Activated CD4-positive, alpha-beta memory T cell treated with anti-CD3 and anti-CD28 coated beads for 36 hours (primary cell): ENCODE measurements at regions of chr1 and their contacts with region 1.

Region 1: GRCh38 chr1:167687919-167688519 is 33.8 kb upstream of the MPZL1 start:
- DNase-seq: peak; percentile 81
- H3K4me3 Mint-ChIP-seq: no peak overlapping the region
- H3K27ac Mint-ChIP-seq: peak overlapping the region; percentile 76
- H3K4me1 Mint-ChIP-seq: peaks cover 19% of the 10 kb centered on the region
- H3K27me3 Mint-ChIP-seq: no peaks in the 10 kb centered on the region

Region 2: DNA sequence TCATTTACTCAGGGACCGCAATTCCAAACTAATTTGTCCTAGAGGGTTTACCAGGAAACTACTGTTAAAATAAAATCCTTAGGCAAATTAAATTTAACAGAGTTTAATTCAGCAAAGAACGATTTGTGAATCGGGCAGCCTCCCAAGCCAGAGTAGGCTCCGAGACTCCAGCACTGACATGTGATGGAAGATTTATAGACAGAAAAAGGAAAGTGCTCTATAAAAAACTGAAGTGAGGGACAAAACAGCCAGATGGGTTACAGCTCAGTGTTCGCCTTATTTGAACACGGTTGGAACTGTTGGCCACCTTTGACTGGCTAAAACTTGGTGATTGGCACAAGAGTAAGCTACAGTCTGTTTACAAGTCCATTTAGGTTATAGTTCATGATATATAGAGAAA is 93.2 kb before region 1 on chr1:
- CTCF ChIA-PET with region 1: interaction called, 227 read pairs
- POLR2A ChIA-PET with region 1: interaction called, 14 read pairs
- intact Hi-C with region 1: loop called (anchors 1 kb)
- DNase-seq: no peak
- H3K4me3 Mint-ChIP-seq: no peak overlapping the region
- H3K27ac Mint-ChIP-seq: no peak overlapping the region
- H3K4me1 Mint-ChIP-seq: peaks cover 3% of the 10 kb centered on the region
- H3K27me3 Mint-ChIP-seq: no peaks in the 10 kb centered on the region

Region 3: GRCh38 chr1:167617153-167618147 is 70.6 kb before region 1 on chr1:
- CTCF ChIA-PET with region 1: interaction called, 25 read pairs
- POLR2A ChIA-PET with region 1: no interaction called
- intact Hi-C with region 1: no loop called
- DNase-seq: peak; percentile 48
- H3K4me3 Mint-ChIP-seq: peak overlapping the region; percentile 69
- H3K27ac Mint-ChIP-seq: peak overlapping the region; percentile 87
- H3K4me1 Mint-ChIP-seq: peaks cover 52% of the 10 kb centered on the region
- H3K27me3 Mint-ChIP-seq: no peaks in the 10 kb centered on the region

Region 4: GRCh38 chr1:167635941-167636340 is 52.1 kb before region 1 on chr1:
- CTCF ChIA-PET with region 1: interaction called, 17 read pairs
- POLR2A ChIA-PET with region 1: interaction called, 5 read pairs
- intact Hi-C with region 1: loop called (anchors 2 kb)
- DNase-seq: no peak
- H3K4me3 Mint-ChIP-seq: no peak overlapping the region
- H3K27ac Mint-ChIP-seq: peak overlapping the region; percentile 87
- H3K4me1 Mint-ChIP-seq: peaks cover 79% of the 10 kb centered on the region
- H3K27me3 Mint-ChIP-seq: no peaks in the 10 kb centered on the region

Region 5: GRCh38 chr1:167669209-167670124 is 18.6 kb before region 1 on chr1:
- CTCF ChIA-PET with region 1: interaction called, 38 read pairs
- POLR2A ChIA-PET with region 1: interaction called, 3 read pairs
- intact Hi-C with region 1: no loop called
- DNase-seq: no peak
- H3K4me3 Mint-ChIP-seq: no peak overlapping the region
- H3K27ac Mint-ChIP-seq: no peak overlapping the region
- H3K4me1 Mint-ChIP-seq: peaks cover 70% of the 10 kb centered on the region
- H3K27me3 Mint-ChIP-seq: no peaks in the 10 kb centered on the region

Region 6: GRCh38 chr1:167708940-167709389 is 20.9 kb after region 1 on chr1:
- CTCF ChIA-PET with region 1: interaction called, 17 read pairs
- POLR2A ChIA-PET with region 1: no interaction called
- intact Hi-C with region 1: loop called (anchors 1 kb)
- DNase-seq: no peak
- H3K4me3 Mint-ChIP-seq: no peak overlapping the region
- H3K27ac Mint-ChIP-seq: peak overlapping the region; percentile 16
- H3K4me1 Mint-ChIP-seq: peaks cover 38% of the 10 kb centered on the region
- H3K27me3 Mint-ChIP-seq: no peaks in the 10 kb centered on the region

Region 7: DNA sequence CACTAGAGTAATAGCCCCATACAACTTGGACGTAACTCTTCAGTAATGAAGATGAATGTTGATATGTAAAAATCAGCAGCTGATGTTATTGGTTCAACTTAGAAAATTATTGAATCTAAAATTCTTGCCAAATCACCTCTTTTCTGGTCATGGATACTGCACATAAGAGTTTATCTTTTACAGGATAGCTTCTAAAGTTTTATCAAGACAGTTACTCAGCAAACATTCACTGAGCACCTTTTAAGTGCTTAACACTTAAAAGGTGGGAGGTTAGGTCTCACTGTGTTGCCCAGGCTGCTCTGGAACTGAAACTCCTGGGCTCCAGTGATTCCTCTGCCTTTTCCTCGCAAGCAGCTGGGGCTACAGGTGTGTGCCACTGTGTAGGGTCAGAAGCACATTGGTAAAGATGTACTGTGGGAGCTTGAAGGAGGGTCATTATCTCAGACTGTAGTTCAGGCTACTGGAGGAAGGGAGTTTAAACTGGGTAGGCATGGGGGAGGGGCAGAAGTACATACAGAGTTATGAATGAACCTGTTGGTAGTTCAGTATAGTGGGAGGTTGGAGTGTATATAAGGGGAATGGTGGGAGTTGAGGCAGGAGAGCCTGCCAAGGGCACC is 35.8 kb after region 1 on chr1:
- CTCF ChIA-PET with region 1: no interaction called
- POLR2A ChIA-PET with region 1: no interaction called
- intact Hi-C with region 1: no loop called
- DNase-seq: no peak
- H3K4me3 Mint-ChIP-seq: no peak overlapping the region
- H3K27ac Mint-ChIP-seq: no peak overlapping the region
- H3K4me1 Mint-ChIP-seq: peaks cover 45% of the 10 kb centered on the region
- H3K27me3 Mint-ChIP-seq: no peaks in the 10 kb centered on the region